ENCODE measurements at regions of chr1 and their contacts with region 1.

Region 1: GRCh38 chr1:108691942-108692723 is at the start of gene PRPF38B:
- DNase-seq: peak; percentile 95 to 97 (median 96)
- ATAC-seq: peak; percentile 99
- H3K4me3 ChIP-seq: peak within 1 kb of the TSS; percentile 60 to 91 (median 84)
- H3K27ac ChIP-seq: peak within 1 kb of the TSS; percentile 93 to 99 (median 97)
- H3K4me1 ChIP-seq: peaks cover 0 to 47% (median 33%) of the 10 kb centered on the region in 12 donors
- H3K27me3 ChIP-seq: no peaks in the 10 kb centered on the region
- CTCF ChIP-seq: no peak
- POLR2A ChIP-seq: peak; percentile 21 to 80
- total RNA-seq, gene PRPF38B: 7.7 to 18.2 (median 13.5) TPM

Region 2: GRCh38 chr1:108199781-108200570 is 492.2 kb before region 1 on chr1 and contains the start of gene SLC25A24:
- intact Hi-C with region 1: loop called in 1 of 10 experiments (anchors 5 kb)
- DNase-seq: peak; percentile 88 to 94 (median 89)
- ATAC-seq: peak; percentile 89 to 99 (median 98)
- H3K4me3 ChIP-seq: peak within 1 kb of the TSS; percentile 77 to 98 (median 92)
- H3K27ac ChIP-seq: peak within 1 kb of the TSS; percentile 94 to 99 (median 96)
- H3K4me1 ChIP-seq: peaks cover 0 to 39% (median 20%) of the 10 kb centered on the region in 12 donors
- H3K27me3 ChIP-seq: no peaks in the 10 kb centered on the region
- CTCF ChIP-seq: no peak
- POLR2A ChIP-seq: peak in 1 of 2 donors; percentile 51
- total RNA-seq, gene SLC25A24: 10.3 to 24.0 (median 15.8) TPM

Region 3: GRCh38 chr1:108661030-108661620 is 31.0 kb before region 1 on chr1 and contains the start of gene HENMT1:
- intact Hi-C with region 1: loop called in 2 of 10 experiments (anchors 2 kb)
- DNase-seq: peak; percentile 57 to 83 (median 65)
- ATAC-seq: peak in 3 of 4 donors; percentile 74 to 90 (median 86)
- H3K4me3 ChIP-seq: peak within 1 kb of the TSS; percentile 50 to 73 (median 59)
- H3K27ac ChIP-seq: peak within 1 kb of the TSS; percentile 81 to 99 (median 90)
- H3K4me1 ChIP-seq: peaks cover 0 to 13% (median 5%) of the 10 kb centered on the region in 12 donors
- H3K27me3 ChIP-seq: no peaks in the 10 kb centered on the region
- CTCF ChIP-seq: no peak
- POLR2A ChIP-seq: peak in 1 of 2 donors; percentile 38
- total RNA-seq, gene HENMT1: 0.44 to 4.5 (median 0.93) TPM

Region 4: DNA sequence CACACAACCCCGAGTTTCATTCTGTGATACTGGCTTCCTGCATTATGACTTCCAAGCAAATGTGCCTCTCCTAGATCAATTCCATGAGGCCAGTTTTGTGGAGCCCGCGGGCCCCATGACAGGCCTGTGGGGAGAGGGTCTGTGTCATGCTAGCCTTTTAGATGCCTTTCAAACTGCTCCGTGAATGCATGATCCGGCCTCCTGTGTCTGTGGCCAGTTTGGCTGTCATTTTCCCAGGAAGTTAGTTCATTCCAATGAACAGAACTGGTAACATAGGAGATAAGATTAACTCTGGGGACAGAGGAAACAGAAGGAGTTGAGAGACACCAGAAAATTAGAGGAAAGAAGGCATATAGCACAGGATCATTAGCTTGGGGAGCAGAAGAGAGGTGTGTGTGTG is 23.8 kb after region 1 on chr1:
- intact Hi-C with region 1: loop called in 1 of 10 experiments (anchors 2 kb)
- DNase-seq: no peak
- ATAC-seq: no peak
- H3K4me3 ChIP-seq: no peak overlapping the region
- H3K27ac ChIP-seq: no peak overlapping the region
- H3K4me1 ChIP-seq: peaks cover 0 to 16% (median 3%) of the 10 kb centered on the region in 12 donors
- H3K27me3 ChIP-seq: peaks cover 0 to 5% (median 0%) of the 10 kb centered on the region in 9 donors
- CTCF ChIP-seq: no peak
- POLR2A ChIP-seq: no peak

Region 5: DNA sequence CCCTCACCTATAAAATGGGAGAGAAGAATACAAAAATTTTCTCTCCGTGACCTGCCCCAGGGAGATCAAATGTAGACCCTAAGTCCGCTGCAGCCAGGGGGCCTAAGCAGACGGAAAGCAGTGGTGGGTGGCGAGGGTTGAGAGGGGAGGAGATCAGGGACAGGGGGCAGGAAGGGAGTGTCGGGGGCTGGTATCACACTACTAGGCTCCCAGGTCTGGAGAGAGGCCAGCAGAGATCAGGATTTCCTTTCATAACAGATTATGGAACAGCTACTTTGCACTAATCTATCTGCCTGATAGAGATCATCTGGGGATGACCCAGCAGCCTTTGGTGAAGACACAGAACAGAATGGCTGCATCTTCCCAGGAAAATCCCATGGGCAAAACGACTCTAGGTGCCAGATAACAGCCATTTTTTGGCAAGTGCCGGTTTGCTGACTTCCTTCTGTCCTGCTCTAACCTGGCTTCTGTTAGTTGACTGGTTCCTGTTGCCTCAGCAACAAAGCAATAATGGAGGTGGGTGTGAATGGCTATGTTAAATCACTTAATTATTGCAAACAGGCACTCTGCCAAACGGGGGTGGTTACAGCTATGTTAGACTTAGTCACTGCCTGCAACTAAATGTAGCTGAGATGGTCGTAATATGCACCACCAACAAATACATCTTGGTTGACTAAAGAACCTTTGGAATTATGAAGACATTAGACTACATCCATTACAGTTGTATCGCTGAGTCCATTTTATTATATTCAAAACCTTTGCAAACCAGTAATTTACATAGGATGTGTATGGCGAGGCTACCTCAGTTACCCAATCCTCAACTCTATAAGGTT is 1101.6 kb after region 1 on chr1:
- intact Hi-C with region 1: no loop called
- DNase-seq: peak in 4 of 5 donors; percentile 48 to 75 (median 65)
- ATAC-seq: peak; percentile 44 to 76 (median 52)
- H3K4me3 ChIP-seq: no peak overlapping the region
- H3K27ac ChIP-seq: peak overlapping the region in 10 of 12 donors; percentile 5 to 70 (median 52)
- H3K4me1 ChIP-seq: peaks cover 6 to 82% (median 46%) of the 10 kb centered on the region in 12 donors
- H3K27me3 ChIP-seq: no peaks in the 10 kb centered on the region
- CTCF ChIP-seq: peak in 3 of 12 donors; percentile 7 to 15 (median 11)
- POLR2A ChIP-seq: no peak

Measured in heart left ventricle (tissue), 16 donors.